Activated CD8-positive, alpha-beta T cell treated with anti-CD3 and anti-CD28 coated beads, Interleukin-2, amount 10 ng/mL, durations not matched to agents 7 days and 5 days (primary cell): ENCODE measurements at regions of chr4 and their contacts with region 1.

Region 1: DNA sequence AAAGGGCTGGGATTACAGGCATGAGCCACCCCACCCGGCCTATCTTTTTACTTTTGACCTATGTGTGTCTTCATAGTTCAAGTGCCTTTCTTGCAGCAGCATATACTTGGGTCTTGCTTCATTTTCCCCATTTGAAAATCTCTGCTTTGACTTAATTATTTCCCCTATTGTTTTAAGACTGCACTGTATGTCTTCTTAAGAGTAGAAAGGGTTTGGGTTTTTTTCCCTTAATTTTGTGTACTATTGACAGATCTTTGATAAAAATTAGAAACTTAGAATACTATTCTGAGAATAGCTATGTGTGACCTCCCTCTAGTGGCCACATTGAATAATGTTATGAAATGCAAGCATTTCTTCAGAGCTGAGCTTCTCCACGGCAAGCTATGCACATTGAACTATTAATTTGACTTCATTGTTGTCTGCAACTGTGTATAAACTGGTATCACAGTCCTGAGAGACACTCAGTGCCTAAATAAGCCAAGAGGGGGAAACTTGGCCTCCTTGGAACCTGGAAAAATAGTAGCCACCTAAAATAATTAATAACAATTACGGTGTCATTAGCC is 8.7 kb upstream of the SLC25A4 start:
- DNase-seq: peak; percentile 35
- ATAC-seq: peak; percentile 73
- H3K4me3 Mint-ChIP-seq: no peak overlapping the region
- H3K27ac Mint-ChIP-seq: no peak overlapping the region
- H3K4me1 Mint-ChIP-seq: no peaks in the 10 kb centered on the region
- H3K27me3 Mint-ChIP-seq: peaks cover 23% of the 10 kb centered on the region

Region 2: DNA sequence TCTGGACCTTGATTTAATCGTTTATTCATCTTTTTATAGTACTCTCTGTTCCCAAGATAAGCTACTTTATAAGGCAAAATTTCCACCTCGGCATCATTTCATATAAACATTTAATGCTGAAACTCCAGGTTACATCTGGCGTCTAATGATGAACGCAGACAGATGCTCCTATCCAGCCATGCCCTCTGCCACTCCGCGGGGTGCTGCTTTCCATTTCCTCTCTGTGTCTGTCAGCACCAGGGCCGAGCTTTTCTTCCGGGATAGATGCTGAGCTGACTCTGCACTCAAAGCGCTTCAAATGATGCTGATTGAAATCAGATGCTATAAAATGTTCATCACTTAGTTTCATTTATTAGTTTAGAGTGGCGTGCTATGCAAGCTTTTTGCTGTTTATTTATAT is 196.6 kb before region 1 on chr4:
- CTCF ChIA-PET with region 1: no interaction called
- POLR2A ChIA-PET with region 1: no interaction called
- DNase-seq: no peak
- ATAC-seq: no peak
- H3K4me3 Mint-ChIP-seq: no peak overlapping the region
- H3K27ac Mint-ChIP-seq: no peak overlapping the region
- H3K4me1 Mint-ChIP-seq: peaks cover 2% of the 10 kb centered on the region
- H3K27me3 Mint-ChIP-seq: peaks cover 30% of the 10 kb centered on the region

Region 3: DNA sequence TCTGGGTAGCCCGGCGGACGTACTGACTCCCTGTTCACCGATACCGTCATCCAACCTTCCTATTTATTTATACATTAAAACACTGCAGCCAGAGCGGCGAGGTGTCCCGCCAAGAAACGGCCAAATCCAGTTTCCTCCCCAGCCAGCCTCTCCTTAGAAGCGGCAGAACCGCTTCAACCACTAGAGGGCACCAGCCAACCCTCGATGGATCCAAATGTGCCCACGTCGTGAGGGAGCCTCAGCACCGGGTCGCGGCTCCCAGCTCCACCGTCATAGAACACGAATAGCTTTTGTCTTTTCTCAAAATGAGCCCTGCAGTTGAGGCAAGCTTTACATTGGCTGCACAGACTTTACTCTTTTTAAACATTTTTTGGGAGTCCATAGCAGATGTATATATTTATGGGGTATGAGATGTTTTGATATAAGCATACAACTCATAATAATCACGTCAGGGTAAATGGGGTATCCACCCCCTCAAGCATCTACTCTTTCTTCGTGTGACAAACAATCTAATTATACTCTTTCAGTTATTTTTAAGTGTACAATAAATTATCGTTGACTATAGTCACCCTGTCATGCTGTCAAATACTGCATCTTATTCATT is 129.1 kb before region 1 on chr4:
- CTCF ChIA-PET with region 1: interaction called, 11 read pairs
- POLR2A ChIA-PET with region 1: no interaction called
- DNase-seq: peak; percentile 86
- ATAC-seq: peak; percentile 97
- H3K4me3 Mint-ChIP-seq: peak overlapping the region; percentile 30
- H3K27ac Mint-ChIP-seq: no peak overlapping the region
- H3K4me1 Mint-ChIP-seq: peaks cover 6% of the 10 kb centered on the region
- H3K27me3 Mint-ChIP-seq: peaks cover 32% of the 10 kb centered on the region

Region 4: GRCh38 chr4:185033950-185034349 is 100.4 kb before region 1 on chr4:
- CTCF ChIA-PET with region 1: interaction called, 49 read pairs
- POLR2A ChIA-PET with region 1: no interaction called
- DNase-seq: no peak
- ATAC-seq: no peak
- H3K4me3 Mint-ChIP-seq: no peak overlapping the region
- H3K27ac Mint-ChIP-seq: no peak overlapping the region
- H3K4me1 Mint-ChIP-seq: no peaks in the 10 kb centered on the region
- H3K27me3 Mint-ChIP-seq: peaks cover 30% of the 10 kb centered on the region

Region 5: GRCh38 chr4:185039508-185040273 is 94.7 kb before region 1 on chr4:
- CTCF ChIA-PET with region 1: interaction called, 49 read pairs
- POLR2A ChIA-PET with region 1: no interaction called
- DNase-seq: peak; percentile 63
- ATAC-seq: peak; percentile 77
- H3K4me3 Mint-ChIP-seq: peak overlapping the region; percentile 3
- H3K27ac Mint-ChIP-seq: no peak overlapping the region
- H3K4me1 Mint-ChIP-seq: peaks cover 7% of the 10 kb centered on the region
- H3K27me3 Mint-ChIP-seq: peaks cover 20% of the 10 kb centered on the region

Region 6: GRCh38 chr4:185062606-185063005 is 71.8 kb before region 1 on chr4:
- CTCF ChIA-PET with region 1: no interaction called
- POLR2A ChIA-PET with region 1: no interaction called
- DNase-seq: no peak
- ATAC-seq: no peak
- H3K4me3 Mint-ChIP-seq: no peak overlapping the region
- H3K27ac Mint-ChIP-seq: no peak overlapping the region
- H3K4me1 Mint-ChIP-seq: no peaks in the 10 kb centered on the region
- H3K27me3 Mint-ChIP-seq: peaks cover 8% of the 10 kb centered on the region

Region 7: DNA sequence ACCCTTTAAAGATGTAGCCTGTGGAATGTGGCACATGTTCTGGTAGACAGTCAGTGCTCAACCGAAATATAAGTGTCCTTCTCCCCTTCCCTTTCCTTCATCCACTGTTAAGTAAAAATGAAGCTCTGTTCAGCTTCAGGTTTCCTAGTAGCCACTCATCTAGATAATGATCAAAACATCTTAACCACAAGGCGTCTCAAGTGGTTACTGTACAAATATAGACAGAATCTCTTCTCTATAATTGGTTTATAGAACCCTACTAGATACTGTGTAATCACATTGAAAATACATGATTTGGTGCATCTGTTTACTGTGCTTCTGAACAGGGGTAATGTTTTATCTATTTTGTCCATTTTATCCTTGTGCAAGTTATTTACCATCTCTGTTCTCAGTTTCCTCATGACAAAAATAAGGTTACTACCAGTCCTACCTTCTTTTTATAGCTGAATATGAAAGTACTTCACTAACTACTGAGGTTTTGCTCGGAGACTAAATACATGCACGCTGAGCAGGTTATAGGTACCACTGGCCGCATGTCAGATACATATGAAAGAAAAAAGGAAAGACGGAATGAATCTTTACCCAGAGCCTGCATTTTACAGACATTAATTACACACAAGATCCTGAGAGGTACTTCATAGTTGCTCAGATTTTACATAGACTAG is 11.6 kb before region 1 on chr4:
- CTCF ChIA-PET with region 1: interaction called, 10 read pairs
- POLR2A ChIA-PET with region 1: no interaction called
- DNase-seq: no peak
- ATAC-seq: no peak
- H3K4me3 Mint-ChIP-seq: no peak overlapping the region
- H3K27ac Mint-ChIP-seq: no peak overlapping the region
- H3K4me1 Mint-ChIP-seq: peaks cover 10% of the 10 kb centered on the region
- H3K27me3 Mint-ChIP-seq: peaks cover 51% of the 10 kb centered on the region

Region 8: GRCh38 chr4:185203486-185204237 is 69.3 kb after region 1 on chr4 and contains the start of gene CFAP97:
- CTCF ChIA-PET with region 1: no interaction called
- POLR2A ChIA-PET with region 1: no interaction called
- DNase-seq: peak; percentile 78
- ATAC-seq: peak; percentile 85
- H3K4me3 Mint-ChIP-seq: peak within 1 kb of the TSS; percentile 91
- H3K27ac Mint-ChIP-seq: peak within 1 kb of the TSS; percentile 96
- H3K4me1 Mint-ChIP-seq: peaks cover 32% of the 10 kb centered on the region
- H3K27me3 Mint-ChIP-seq: no peaks in the 10 kb centered on the region
- total RNA-seq, gene CFAP97: 29.1 to 30.0 TPM

Region 9: GRCh38 chr4:185481401-185481800 is 347.0 kb after region 1 on chr4:
- CTCF ChIA-PET with region 1: no interaction called
- POLR2A ChIA-PET with region 1: no interaction called
- DNase-seq: no peak
- ATAC-seq: no peak
- H3K4me3 Mint-ChIP-seq: no peak overlapping the region
- H3K27ac Mint-ChIP-seq: no peak overlapping the region
- H3K4me1 Mint-ChIP-seq: no peaks in the 10 kb centered on the region
- H3K27me3 Mint-ChIP-seq: peaks cover 39% of the 10 kb centered on the region